Transverse colon (tissue), 4 donors: ENCODE measurements at regions of chr9 and their contacts with region 1.

Region 1: DNA sequence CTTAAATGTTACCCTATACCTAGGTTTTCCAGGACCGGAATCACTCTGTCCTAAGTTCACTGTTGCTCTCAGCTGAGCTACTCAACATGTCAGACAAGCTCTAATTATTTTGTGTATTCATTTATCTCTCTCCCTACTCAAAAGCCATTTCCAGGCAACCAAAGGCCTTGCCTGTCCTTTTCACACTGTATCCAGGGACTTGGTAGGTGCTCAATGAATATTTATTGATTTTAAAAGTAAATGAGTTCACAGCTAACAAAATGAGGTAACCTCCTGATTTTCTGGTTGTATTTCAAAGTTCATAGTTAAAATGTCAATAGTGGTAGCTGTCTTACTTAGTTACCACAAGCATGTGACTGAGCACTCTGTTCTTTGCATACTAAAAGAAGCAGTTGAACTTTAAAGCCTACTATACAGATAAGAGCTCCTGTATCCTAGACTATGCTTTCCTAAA is 522.2 kb downstream of the ACTL7B start:
- DNase-seq: no peak
- H3K4me3 ChIP-seq: no peak overlapping the region
- H3K27ac ChIP-seq: no peak overlapping the region
- H3K4me1 ChIP-seq: no peaks in the 10 kb centered on the region
- H3K27me3 ChIP-seq: no peaks in the 10 kb centered on the region
- CTCF ChIP-seq: no peak
- EP300 ChIP-seq: no peak
- POLR2A ChIP-seq: no peak

Region 2: GRCh38 chr9:106383072-106383471 is 1950.5 kb before region 1 on chr9:
- in situ Hi-C with region 1: no loop called
- intact Hi-C with region 1: loop called (anchors 10 kb)
- DNase-seq: no peak
- H3K4me3 ChIP-seq: no peak overlapping the region
- H3K27ac ChIP-seq: no peak overlapping the region
- H3K4me1 ChIP-seq: no peaks in the 10 kb centered on the region
- H3K27me3 ChIP-seq: no peaks in the 10 kb centered on the region
- CTCF ChIP-seq: no peak
- EP300 ChIP-seq: no peak
- POLR2A ChIP-seq: no peak